Panc1 (cell line): ENCODE measurements at regions of chr1 and their contacts with region 1.

Region 1: GRCh38 chr1:112619520-112620376 is at the start of gene CAPZA1:
- DNase-seq: no peak
- ATAC-seq: peak; percentile 97
- H3K4me3 ChIP-seq: peak within 1 kb of the TSS; percentile 96 to 97
- H3K27ac ChIP-seq: peak within 1 kb of the TSS; percentile 99
- H3K4me1 ChIP-seq: peaks cover 9% of the 10 kb centered on the region; the same call in 1 of the 2 replicates
- H3K27me3 ChIP-seq: no peaks in the 10 kb centered on the region
- CTCF ChIP-seq: no peak
- total RNA-seq, gene CAPZA1: 128 TPM

Region 2: DNA sequence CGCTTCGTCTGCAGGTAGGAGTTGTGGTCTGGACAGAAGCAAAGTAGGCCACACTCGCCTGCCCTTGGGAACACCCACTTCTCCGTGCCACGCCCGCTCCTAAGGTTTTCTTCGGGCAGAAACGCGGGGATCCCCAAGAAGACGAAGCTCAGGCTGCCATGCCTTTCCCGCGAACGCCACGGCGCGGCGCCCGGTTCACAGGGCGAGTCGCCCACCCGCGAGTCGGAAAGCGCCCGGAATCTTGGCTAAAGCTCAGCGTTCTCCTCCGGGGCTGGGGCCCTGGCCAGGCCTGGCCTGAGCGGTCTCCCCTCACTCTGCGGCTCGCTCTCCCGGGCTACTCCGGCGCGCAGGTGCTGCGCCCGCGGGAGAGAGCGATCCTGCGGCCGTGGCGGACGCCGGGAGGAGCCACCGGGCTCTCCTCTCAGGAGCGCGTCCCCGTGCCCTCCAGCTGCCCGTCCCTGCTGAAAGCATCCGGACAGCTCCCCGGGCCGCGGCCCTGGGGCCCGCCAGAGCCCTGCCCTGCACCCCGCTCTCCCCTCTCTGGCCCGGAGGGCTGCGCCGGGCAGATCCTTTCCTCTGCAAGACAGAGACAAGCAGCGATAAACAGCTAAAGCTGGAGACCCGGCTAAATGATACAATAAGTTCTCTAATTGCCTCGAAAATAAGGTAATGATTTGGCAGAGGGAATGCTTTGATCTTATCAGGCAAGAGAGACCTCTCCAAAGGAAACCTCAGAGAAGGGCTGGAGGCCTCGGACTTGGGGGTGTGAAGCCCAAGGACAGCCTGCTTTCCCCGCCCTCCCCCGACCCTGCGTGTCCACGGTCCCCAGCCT is 117.7 kb before region 1 on chr1:
- CTCF ChIA-PET with region 1: no interaction called
- POLR2A ChIA-PET with region 1: no interaction called
- in situ Hi-C with region 1: no loop called
- intact Hi-C with region 1: loop called (anchors 10 kb)
- DNase-seq: peak; percentile 24
- ATAC-seq: peak; percentile 80
- H3K4me3 ChIP-seq: peak overlapping the region; percentile 47 to 56
- H3K27ac ChIP-seq: no peak overlapping the region
- H3K4me1 ChIP-seq: no peaks in the 10 kb centered on the region; the same call in 1 of the 2 replicates
- H3K27me3 ChIP-seq: no peaks in the 10 kb centered on the region
- CTCF ChIP-seq: peak; percentile 80